ENCODE measurements at regions of chr5 and their contacts with region 1.

Region 1: DNA sequence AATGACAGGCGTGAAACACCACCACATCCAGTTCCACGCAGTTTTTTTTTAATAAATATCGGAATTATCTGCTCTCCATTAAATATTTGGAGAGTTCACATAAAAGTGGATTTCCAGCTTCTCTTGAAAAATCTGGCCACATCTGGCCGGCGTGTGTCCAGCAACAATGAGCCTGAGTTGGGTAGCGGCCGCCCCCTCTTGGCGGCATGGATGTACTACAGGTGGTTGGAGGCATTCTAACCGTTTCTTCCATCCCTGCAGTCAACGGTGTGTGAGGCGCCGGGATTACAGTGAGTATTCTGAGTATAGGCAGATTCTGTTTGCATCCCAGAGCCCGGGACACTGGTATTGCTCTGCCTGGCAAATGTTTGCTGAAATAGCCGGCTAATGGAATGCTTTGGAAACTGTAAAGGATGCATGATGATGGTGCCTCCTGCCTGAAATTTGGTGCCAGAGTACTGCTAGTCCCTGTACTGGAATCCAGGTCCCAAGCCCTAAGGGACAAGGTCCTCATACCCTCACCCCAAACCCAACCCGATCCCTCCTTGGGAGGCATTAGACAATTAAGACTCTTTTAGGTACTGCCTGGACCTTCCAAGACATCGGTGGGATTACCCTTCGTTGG is 13.6 kb upstream of the GM2A start:
- DNase-seq: peak; percentile 41 to 62
- H3K4me3 ChIP-seq: no peak overlapping the region
- H3K27ac ChIP-seq: no peak overlapping the region
- H3K4me1 ChIP-seq: peaks cover 2 to 8% of the 10 kb centered on the region in 2 donors
- H3K27me3 ChIP-seq: no peaks in the 10 kb centered on the region
- CTCF ChIP-seq: peak; percentile 45 to 89 (median 60)
- POLR2A ChIP-seq: no peak

Region 2: DNA sequence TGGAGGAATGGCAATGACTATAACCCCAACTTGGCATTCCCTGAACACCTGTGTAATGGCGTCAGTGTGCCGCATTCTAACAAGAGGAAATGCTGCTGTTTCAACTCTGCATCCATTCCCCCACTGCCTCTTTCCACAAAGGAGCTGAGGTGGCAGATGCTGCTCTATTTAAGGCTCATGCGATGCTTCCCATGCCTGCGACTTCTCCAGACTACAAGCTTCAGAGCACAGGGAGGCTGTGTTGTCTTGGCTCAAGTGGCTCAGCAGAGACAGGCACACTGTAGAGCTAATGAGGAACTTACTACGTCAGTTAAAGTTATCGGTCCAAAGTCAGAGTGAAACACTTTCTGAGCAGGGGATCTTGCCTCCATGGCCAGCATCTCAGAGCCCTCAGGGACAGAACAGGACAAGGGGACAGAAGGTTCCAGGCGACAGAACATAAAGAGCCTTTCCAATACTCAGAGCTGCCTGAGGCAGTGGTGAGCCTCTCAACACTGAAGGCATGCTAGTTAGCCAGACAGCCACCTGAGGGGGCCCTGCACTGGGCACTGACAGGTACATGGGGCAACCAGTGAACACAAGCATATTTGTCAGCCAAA is 180.4 kb before region 1 on chr5:
- intact Hi-C with region 1: no loop called
- DNase-seq: peak; percentile 90 to 92
- H3K4me3 ChIP-seq: no peak overlapping the region
- H3K27ac ChIP-seq: peak overlapping the region; percentile 78 to 92 (median 91)
- H3K4me1 ChIP-seq: peaks cover 50 to 74% of the 10 kb centered on the region in 2 donors
- H3K27me3 ChIP-seq: no peaks in the 10 kb centered on the region
- CTCF ChIP-seq: peak in 2 of 6 experiments; percentile 10 to 16
- POLR2A ChIP-seq: peak in 1 of 2 donors; percentile 70

Region 3: GRCh38 chr5:151107738-151108508 is 131.4 kb before region 1 on chr5:
- intact Hi-C with region 1: no loop called
- DNase-seq: peak; percentile 87 to 92
- H3K4me3 ChIP-seq: no peak overlapping the region
- H3K27ac ChIP-seq: peak overlapping the region; percentile 68 to 85 (median 81)
- H3K4me1 ChIP-seq: peaks cover 20 to 27% of the 10 kb centered on the region in 2 donors
- H3K27me3 ChIP-seq: no peaks in the 10 kb centered on the region
- CTCF ChIP-seq: peak in 4 of 6 experiments; percentile 29 to 53 (median 35)
- POLR2A ChIP-seq: no peak

Region 4: GRCh38 chr5:151134238-151134637 is 105.1 kb before region 1 on chr5:
- intact Hi-C with region 1: loop called (anchors 10 kb)
- DNase-seq: no peak
- H3K4me3 ChIP-seq: no peak overlapping the region
- H3K27ac ChIP-seq: no peak overlapping the region
- H3K4me1 ChIP-seq: no peaks in the 10 kb centered on the region
- H3K27me3 ChIP-seq: no peaks in the 10 kb centered on the region
- CTCF ChIP-seq: no peak
- POLR2A ChIP-seq: no peak

Region 5: DNA sequence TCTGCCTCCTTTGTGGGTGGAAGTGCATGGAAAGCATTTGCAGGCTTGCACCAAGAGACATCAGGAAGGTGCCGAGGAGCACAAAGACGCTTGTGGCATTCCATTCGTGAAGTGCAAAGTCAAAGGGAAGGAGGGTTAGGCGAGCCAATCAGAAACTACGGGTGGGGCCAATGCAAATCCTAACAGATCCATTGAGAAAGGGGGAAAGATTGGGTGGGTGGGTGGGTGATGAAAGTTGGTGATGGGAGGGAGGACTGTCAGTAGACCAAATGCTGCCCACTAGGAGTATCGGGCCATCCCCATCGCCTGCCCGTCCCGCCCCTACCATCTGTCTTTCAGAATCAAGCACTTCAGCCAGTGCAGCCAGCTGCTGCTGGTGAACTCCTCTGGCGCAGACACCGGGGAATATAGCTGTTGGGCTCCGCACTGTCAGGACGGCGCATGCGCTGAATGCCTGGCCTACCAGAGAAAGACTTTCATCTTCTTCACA is 64.7 kb before region 1 on chr5:
- intact Hi-C with region 1: loop called (anchors 5 kb)
- DNase-seq: peak; percentile 14 to 34
- H3K4me3 ChIP-seq: no peak overlapping the region
- H3K27ac ChIP-seq: no peak overlapping the region
- H3K4me1 ChIP-seq: no peaks in the 10 kb centered on the region
- H3K27me3 ChIP-seq: no peaks in the 10 kb centered on the region
- CTCF ChIP-seq: no peak
- POLR2A ChIP-seq: no peak